Heart right ventricle (tissue), 16 donors: ENCODE measurements at regions of chr17 and their contacts with region 1.

Region 1: DNA sequence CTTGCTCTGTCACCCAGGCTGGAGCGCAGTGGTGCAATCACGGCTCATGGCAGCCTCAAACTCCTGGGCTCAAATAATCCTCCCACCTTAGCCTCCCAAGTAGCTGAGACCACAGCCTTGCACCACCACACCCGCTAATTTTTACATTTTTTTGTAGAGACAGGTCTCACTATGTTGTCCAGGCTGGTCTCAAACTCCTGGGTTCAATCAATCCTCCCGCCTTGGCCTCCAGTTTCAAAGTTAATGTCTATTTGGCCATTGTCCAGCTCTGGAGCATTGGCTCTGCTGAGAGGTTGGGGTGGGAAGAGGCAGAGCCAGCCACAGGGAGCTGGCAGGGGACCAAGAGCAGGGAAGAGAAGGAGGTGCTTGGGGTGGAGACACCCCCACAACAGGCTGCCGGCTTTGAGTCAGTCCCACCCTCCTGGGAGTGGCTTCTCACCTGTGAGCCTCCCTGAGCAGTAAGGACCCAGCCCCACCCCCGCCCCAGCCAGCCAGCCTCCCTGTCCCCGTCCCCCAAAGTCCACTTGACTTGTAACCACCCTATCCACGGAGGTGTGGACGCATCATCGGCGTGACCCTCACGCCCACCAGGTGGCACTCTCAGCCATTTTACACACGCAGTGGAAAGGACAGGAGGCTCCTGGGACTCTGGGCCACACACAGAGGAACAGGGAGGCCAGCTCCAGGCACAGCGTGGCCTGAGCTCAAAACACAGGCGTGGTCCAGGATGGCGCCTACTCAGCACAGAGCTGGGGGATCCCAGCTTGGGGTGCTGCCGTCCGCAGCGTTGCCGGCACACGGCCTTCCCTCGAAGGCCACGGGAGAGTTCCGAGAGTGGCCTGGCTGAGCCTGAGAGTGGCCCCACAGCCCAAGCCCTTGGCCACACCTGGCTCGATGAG is 22.8 kb upstream of the PVALEF start:
- DNase-seq: peak; percentile 81 to 82
- ATAC-seq: peak; percentile 89 to 98 (median 92)
- H3K4me3 ChIP-seq: no peak overlapping the region
- H3K27ac ChIP-seq: no peak overlapping the region
- H3K4me1 ChIP-seq: peaks cover 0 to 9% (median 9%) of the 10 kb centered on the region in 9 donors
- H3K27me3 ChIP-seq: no peaks in the 10 kb centered on the region
- CTCF ChIP-seq: peak; percentile 47 to 77 (median 75)

Region 2: DNA sequence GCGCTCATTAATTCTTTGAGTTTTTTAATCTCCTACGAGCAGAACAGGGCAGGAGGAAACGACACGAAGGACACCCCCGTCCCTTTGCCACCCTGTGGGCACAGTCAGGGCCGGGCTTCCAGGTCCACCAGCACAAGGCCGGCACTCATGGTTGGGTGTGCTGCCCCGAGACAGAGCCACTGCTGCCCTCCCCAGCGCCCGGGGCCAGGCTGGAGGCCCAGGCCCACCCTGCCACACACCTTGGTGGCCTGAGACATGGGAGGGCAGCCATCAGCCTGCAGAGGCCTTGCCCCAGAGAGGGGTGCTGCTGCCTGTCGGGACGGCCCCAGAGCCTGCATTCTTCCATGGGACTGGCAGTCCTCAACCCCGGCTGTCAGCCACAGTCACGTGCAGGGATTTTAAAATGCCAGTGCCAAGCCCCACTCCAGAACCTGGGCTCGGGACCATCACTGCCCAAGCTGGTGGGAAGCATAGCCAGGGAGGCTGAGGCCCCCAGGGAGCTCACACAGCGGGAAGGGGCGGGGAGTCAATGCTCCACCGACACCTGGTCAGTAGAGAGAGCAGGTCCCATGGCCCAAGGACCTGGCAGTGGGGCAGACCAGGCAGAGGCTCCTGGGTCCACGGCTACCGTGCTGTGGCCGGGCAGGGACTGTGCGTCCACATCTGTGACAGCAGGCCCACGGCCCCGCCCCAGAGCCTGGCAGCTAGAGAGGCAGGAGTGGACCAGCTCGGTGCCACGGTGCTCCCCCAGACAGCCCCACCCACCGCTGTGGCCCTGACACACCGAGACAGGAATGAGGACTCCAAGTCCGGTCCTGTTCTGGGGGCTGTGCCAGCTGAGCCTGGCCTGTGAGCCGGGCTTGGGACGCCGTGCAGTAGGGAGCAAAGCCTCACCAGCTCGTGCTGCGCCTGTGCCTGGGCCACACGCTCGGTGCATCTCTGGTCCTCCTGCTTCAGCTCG is 52.7 kb after region 1 on chr17:
- intact Hi-C with region 1: loop called in 8 of 10 experiments (anchors 1 to 10 kb)
- DNase-seq: peak; percentile 58 to 72
- ATAC-seq: peak; percentile 50 to 92 (median 76)
- H3K4me3 ChIP-seq: no peak overlapping the region
- H3K27ac ChIP-seq: peak overlapping the region in 8 of 10 donors; percentile 19 to 75 (median 64)
- H3K4me1 ChIP-seq: peaks cover 0 to 44% (median 20%) of the 10 kb centered on the region in 9 donors
- H3K27me3 ChIP-seq: no peaks in the 10 kb centered on the region
- CTCF ChIP-seq: no peak

Region 3: DNA sequence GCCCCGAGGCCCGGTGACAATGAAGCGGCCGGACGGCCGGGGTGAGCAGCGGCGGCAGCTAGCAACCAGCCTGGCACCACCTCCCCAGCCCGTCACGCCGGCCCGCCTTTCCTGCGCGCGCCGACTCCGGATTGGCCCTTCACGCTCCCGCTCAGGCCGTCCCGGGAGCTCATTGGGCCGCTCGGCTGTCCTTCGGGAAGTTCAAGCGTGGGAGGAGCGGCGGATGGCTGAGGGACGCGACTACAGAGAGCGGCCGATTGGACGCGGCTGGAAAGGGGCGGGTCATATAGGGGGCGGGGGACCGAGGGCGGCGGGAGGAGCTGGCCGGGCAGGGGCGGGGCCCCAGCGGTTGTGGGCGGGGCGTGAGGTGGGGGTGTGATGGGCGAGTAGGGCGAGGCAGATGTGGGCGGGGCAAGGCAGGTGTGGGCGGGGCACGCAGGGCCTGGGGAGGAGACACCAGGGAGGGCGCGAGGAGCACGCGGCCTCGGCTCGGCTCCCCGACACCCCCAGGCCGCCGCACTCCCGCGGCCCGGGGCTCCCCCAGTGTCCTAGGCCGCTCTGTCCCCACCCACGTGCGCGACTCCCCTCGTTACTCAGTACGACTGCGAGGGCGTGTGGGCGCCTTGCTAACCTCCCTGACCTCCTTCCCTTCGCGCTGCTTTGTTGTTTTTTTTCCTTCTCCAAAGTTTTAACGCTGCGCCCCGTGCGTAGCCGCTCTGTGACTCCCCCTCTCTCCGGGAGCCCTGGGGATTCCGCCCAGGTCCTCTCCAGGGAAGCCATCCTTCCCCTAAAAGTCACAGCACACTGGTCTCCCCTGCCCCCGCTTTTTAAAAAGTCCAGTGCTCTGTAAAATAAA is 80.6 kb after region 1 on chr17 and contains the start of gene CEP131:
- intact Hi-C with region 1: loop called in 2 of 10 experiments (anchors 5 to 10 kb)
- DNase-seq: peak; percentile 99 to 100
- ATAC-seq: peak; percentile 98 to 100 (median 99)
- H3K4me3 ChIP-seq: peak within 1 kb of the TSS; percentile 69 to 93 (median 84)
- H3K27ac ChIP-seq: peak within 1 kb of the TSS in 4 of 10 donors; percentile 14 to 77 (median 62)
- H3K4me1 ChIP-seq: peaks cover 7 to 26% (median 17%) of the 10 kb centered on the region in 9 donors
- H3K27me3 ChIP-seq: no peaks in the 10 kb centered on the region
- CTCF ChIP-seq: peak in 1 of 9 donors; percentile 6
- total RNA-seq, gene CEP131: 6.4 to 14.4 (median 7.6) TPM

Region 4: DNA sequence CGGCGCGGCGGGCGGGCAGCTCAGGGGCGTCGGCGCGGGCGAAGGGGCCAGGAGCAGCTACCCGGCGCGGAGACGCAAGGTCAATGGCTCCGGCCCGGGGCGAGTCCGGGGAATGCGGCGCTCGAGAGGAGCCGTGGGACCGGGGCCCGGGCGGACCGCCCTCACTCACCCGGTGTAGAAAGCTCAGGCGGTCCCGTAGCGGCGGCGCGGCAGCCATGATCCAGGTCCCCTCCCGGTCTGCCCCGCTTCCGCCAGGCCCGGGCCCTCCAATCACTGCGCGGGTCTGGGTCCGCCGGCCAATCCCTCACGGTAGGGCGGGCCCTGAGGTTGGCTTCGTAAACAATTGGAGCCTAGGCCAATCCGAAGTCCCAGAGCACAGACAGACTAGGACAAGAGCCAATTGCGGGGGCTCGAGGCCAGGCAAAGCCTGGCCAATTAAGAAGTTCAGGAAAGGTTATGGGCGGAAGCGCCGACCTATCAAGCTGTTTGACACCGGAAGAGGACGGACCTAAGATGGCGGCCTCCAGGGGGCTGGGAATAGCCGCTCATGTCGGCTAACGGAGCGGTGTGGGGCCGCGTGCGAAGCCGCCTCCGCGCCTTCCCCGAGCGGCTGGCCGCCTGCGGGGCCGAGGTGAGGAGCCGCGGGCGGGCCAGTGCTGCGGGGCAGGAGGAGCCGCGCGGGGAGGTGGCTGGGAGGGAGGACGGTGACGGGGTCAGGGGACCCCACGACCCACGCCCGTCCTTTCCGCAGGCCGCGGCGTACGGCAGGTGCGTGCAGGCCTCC is 96.5 kb after region 1 on chr17 and contains the starts of genes NDUFAF8 and TEPSIN:
- intact Hi-C with region 1: loop called in 9 of 10 experiments (anchors 1 to 5 kb)
- DNase-seq: peak; percentile 95 to 98
- ATAC-seq: peak; percentile 96 to 99 (median 98)
- H3K4me3 ChIP-seq: peak within 1 kb of the TSS; percentile 81 to 100 (median 92)
- H3K27ac ChIP-seq: peak within 1 kb of the TSS; percentile 59 to 90 (median 82)
- H3K4me1 ChIP-seq: peaks cover 10 to 52% (median 32%) of the 10 kb centered on the region in 9 donors
- H3K27me3 ChIP-seq: no peaks in the 10 kb centered on the region
- CTCF ChIP-seq: peak in 2 of 9 donors; percentile 8 to 25
- total RNA-seq, gene NDUFAF8: 49.6 to 74.8 (median 58.9) TPM
- total RNA-seq, gene TEPSIN: 6.2 to 21.4 (median 9.2) TPM

Region 5: GRCh38 chr17:81484195-81484979 is 341.8 kb after region 1 on chr17:
- intact Hi-C with region 1: loop called in 1 of 10 experiments (anchors 10 kb)
- DNase-seq: peak; percentile 88 to 90
- ATAC-seq: peak; percentile 48 to 76 (median 64)
- H3K4me3 ChIP-seq: peak overlapping the region in 9 of 10 donors; percentile 33 to 59 (median 54)
- H3K27ac ChIP-seq: peak overlapping the region in 5 of 10 donors; percentile 38 to 59 (median 52)
- H3K4me1 ChIP-seq: peaks cover 23 to 78% (median 61%) of the 10 kb centered on the region in 9 donors
- H3K27me3 ChIP-seq: peaks cover 0 to 40% (median 0%) of the 10 kb centered on the region in 7 donors
- CTCF ChIP-seq: peak in 8 of 9 donors; percentile 95 to 100 (median 99)